ENCODE measurements at regions of chr2 and their contacts with region 1.

Region 1: DNA sequence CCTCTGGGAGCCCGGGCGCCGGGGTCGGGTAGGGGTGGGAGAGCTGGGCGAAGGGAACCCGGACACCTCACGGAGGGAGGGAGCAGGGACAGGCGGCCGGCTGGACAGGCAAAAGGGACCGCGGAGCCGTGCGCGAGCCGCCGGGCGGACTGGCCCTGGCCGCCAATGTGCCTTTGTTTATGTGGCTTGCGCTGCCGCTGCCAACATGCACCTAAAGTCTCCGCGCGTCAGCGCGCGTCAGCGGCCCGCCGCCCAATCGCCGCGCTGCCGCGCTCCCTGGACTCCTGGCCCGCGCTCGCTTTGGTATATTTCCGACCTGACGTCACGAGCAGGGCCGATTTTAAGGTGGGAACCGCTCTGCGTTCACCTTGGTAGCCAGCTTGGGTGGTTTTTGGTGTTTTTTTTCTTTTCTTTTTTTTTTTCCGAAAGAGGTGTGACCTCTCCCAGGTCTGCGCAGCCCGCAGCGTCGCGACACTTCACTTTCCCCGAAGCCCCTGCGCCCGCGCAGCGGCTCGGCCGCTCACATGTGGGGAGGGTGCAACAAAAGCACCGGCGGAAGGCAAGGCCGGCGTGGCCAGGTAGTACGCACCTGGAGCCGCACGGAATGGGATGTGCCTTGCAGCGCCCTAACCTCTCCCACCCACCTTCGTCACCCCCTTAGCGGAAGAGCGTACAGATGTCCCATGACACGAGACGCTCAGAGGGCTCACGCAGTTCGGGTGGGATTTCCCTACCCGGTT is at the start of gene NR4A2:
- DNase-seq: peak; percentile 86 to 95 (median 90)
- ATAC-seq: peak; percentile 81
- H3K4me3 ChIP-seq: peak within 1 kb of the TSS; percentile 80
- H3K27ac ChIP-seq: peak within 1 kb of the TSS; percentile 88
- H3K4me1 ChIP-seq: peaks cover 6 to 27% of the 10 kb centered on the region in 2 experiments
- H3K27me3 ChIP-seq: no peaks in the 10 kb centered on the region
- CTCF ChIP-seq: no peak; a peak in 1 of 6 replicates
- EP300 ChIP-seq: no peak
- POLR2A ChIP-seq: peak; percentile 76
- RAD21 ChIP-seq: no peak
- polyA plus RNA-seq, gene NR4A2: 1.3 to 2.1 TPM

Region 2: GRCh38 chr2:155356250-155356649 is 976.5 kb before region 1 on chr2:
- CTCF ChIA-PET with region 1: no interaction called
- POLR2A ChIA-PET with region 1: no interaction called
- in situ Hi-C with region 1: no loop called
- intact Hi-C with region 1: loop called (anchors 2 kb)
- DNase-seq: no peak
- ATAC-seq: no peak; the same call in 2 of the 3 replicates
- H3K4me3 ChIP-seq: no peak overlapping the region
- H3K27ac ChIP-seq: no peak overlapping the region
- H3K4me1 ChIP-seq: no peaks in the 10 kb centered on the region; a peak in 1 of 5 replicates
- H3K27me3 ChIP-seq: no peaks in the 10 kb centered on the region
- CTCF ChIP-seq: no peak
- EP300 ChIP-seq: no peak
- POLR2A ChIP-seq: no peak
- RAD21 ChIP-seq: no peak

Region 3: GRCh38 chr2:156192468-156192867 is 140.2 kb before region 1 on chr2:
- CTCF ChIA-PET with region 1: no interaction called
- POLR2A ChIA-PET with region 1: interaction called, 3 read pairs
- in situ Hi-C with region 1: no loop called
- intact Hi-C with region 1: loop called (anchors 5 kb)
- DNase-seq: no peak
- ATAC-seq: peak; percentile 64; the same call in 2 of the 3 replicates
- H3K4me3 ChIP-seq: no peak overlapping the region
- H3K27ac ChIP-seq: no peak overlapping the region
- H3K4me1 ChIP-seq: no peaks in the 10 kb centered on the region
- H3K27me3 ChIP-seq: no peaks in the 10 kb centered on the region
- CTCF ChIP-seq: peak in 2 of 3 experiments; percentile 4 to 52; a peak in 2 of 6 replicates
- EP300 ChIP-seq: no peak
- POLR2A ChIP-seq: no peak
- RAD21 ChIP-seq: peak; percentile 31 to 55; a peak in 3 of 4 replicates

Region 4: GRCh38 chr2:156294945-156295580 is 37.6 kb before region 1 on chr2:
- CTCF ChIA-PET with region 1: no interaction called
- POLR2A ChIA-PET with region 1: no interaction called
- in situ Hi-C with region 1: no loop called
- intact Hi-C with region 1: no loop called
- DNase-seq: no peak
- ATAC-seq: no peak
- H3K4me3 ChIP-seq: no peak overlapping the region
- H3K27ac ChIP-seq: no peak overlapping the region
- H3K4me1 ChIP-seq: no peaks in the 10 kb centered on the region
- H3K27me3 ChIP-seq: no peaks in the 10 kb centered on the region
- CTCF ChIP-seq: no peak
- EP300 ChIP-seq: no peak
- POLR2A ChIP-seq: no peak
- RAD21 ChIP-seq: no peak

Region 5: DNA sequence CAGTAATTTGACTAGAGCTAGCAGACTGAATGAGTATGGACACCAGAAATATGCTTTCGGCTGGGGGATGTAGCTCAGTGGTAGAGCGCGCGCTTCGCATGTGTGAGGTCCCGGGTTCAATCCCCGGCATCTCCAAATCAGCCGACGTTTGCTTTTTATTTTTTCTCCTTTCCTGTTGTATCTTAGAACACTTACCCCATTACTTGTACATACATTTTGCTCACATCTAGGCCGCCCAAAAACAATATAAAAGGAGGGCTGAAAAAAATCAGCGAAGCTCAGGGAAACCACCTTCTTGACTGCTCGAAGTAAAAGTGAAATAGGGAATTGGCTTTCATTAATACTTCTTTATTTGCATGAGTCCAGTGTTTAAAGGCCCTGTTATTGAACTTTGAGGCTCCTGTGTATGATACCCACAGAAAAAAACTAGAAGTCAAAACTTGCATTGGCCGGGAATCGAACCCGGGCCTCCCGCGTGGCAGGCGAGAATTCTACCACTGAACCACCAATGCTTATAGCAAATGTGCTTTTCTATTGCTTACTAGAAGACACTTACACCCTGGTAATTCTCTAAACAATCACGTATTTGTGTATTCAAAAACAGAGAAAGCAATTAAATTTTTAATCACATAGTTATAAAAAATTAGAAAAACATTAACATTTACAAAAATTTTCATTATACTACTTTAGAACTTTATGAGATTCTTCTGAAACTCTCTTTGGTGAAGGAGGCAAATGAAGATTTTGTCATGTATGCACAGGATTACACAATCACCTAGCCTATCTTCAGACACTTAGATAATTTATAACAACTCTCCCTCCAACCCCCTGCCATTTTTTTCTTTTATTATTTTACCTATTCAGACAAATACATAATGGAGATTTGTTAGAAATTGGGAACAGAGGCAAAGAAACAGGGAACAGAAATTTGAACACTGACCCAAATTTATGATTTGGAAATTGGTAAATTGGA is 68.3 kb after region 1 on chr2:
- CTCF ChIA-PET with region 1: no interaction called
- POLR2A ChIA-PET with region 1: interaction called, 4 read pairs
- in situ Hi-C with region 1: no loop called
- intact Hi-C with region 1: loop called (anchors 1 kb)
- DNase-seq: peak; percentile 73 to 84 (median 74)
- ATAC-seq: peak; percentile 84
- H3K4me3 ChIP-seq: peak overlapping the region; percentile 63
- H3K27ac ChIP-seq: peak overlapping the region; percentile 77
- H3K4me1 ChIP-seq: peaks cover 8 to 18% of the 10 kb centered on the region in 2 experiments; a peak in 4 of 5 replicates
- H3K27me3 ChIP-seq: no peaks in the 10 kb centered on the region
- CTCF ChIP-seq: peak in 1 of 3 experiments; percentile 15; a peak in 1 of 6 replicates
- EP300 ChIP-seq: peak; percentile 60; the same call in 1 of the 2 replicates
- POLR2A ChIP-seq: no peak
- RAD21 ChIP-seq: peak; percentile 32 to 42

Region 6: GRCh38 chr2:156580501-156580900 is 247.8 kb after region 1 on chr2:
- CTCF ChIA-PET with region 1: no interaction called
- POLR2A ChIA-PET with region 1: interaction called, 3 read pairs
- in situ Hi-C with region 1: loop called (anchors 10 kb)
- intact Hi-C with region 1: loop called (anchors 2 kb)
- DNase-seq: no peak
- ATAC-seq: peak; percentile 36
- H3K4me3 ChIP-seq: no peak overlapping the region
- H3K27ac ChIP-seq: no peak overlapping the region
- H3K4me1 ChIP-seq: no peaks in the 10 kb centered on the region
- H3K27me3 ChIP-seq: no peaks in the 10 kb centered on the region
- CTCF ChIP-seq: no peak
- EP300 ChIP-seq: no peak
- POLR2A ChIP-seq: no peak
- RAD21 ChIP-seq: no peak